CD4-positive, alpha-beta T cell (primary cell): ENCODE measurements at regions of chr14 and their contacts with region 1.

Region 1: GRCh38 chr14:39432179-39432618 is at the start of gene FBXO33:
- DNase-seq: peak; percentile 94 to 98 (median 96)
- ATAC-seq: peak; percentile 81
- H3K4me3 ChIP-seq: peak within 1 kb of the TSS; percentile 88
- H3K4me3 Mint-ChIP-seq: peak within 1 kb of the TSS; percentile 100
- H3K27ac ChIP-seq: peak within 1 kb of the TSS; percentile 99 to 100
- H3K27ac Mint-ChIP-seq: peak within 1 kb of the TSS; percentile 100
- H3K4me1 ChIP-seq: peaks cover 31% of the 10 kb centered on the region
- H3K4me1 Mint-ChIP-seq: peaks cover 50% of the 10 kb centered on the region
- H3K27me3 ChIP-seq: no peaks in the 10 kb centered on the region
- H3K27me3 Mint-ChIP-seq: no peaks in the 10 kb centered on the region
- CTCF ChIP-seq: no peak
- total RNA-seq, gene FBXO33: 94.6 to 97.4 TPM

Region 2: DNA sequence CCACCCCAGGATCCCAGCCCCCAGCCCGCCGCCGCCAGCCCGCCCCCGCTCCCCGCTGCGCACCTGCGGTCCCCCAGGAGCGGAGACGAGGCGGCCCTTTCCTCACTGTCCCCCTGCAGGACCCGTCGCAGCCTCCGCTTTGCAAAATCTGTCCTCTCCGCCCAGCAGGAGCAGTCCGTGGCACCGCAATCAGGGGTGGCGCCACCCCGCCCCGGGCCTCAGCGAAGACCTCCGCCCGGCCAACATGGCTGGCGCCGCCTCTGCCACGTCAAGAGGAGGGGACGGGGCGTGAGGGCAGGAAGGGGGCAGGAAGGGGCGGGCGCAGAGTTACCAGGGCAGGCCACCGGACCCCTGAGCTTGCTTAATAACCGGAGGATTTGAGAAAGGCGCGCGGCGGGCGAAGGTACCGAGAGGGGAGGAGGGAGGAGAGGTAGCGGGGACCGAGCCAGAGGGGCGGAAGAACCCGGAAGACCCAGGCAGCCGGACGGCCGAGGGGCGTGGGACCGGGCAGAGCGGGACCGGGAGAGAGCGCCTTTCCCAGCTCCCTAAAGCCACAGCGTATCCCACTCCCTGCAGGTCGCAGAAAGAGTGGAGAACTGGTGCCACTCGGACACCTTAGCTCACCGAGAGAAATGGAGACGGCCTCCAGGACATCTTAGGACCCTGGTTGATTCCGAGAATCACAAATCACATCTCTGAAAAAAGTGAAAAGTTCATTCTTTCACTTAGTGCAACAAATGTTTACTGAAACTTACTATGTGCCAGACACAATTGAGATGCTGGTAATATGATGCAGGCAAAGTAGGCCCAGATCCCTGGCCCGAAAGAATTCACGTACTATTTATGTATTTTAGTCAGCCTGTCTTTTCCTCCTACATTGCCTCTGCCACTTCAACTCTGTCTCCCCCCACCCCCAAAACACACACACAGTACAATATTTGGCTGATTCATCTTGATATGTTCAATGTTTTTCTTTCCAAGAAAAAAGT is 328.9 kb before region 1 on chr14 and contains the start of gene SEC23A:
- CTCF ChIA-PET with region 1: no interaction called
- POLR2A ChIA-PET with region 1: interaction called, 51 read pairs
- intact Hi-C with region 1: loop called in 1 of 2 experiments (anchors 2 kb)
- DNase-seq: peak; percentile 62 to 91 (median 78)
- ATAC-seq: peak; percentile 95
- H3K4me3 ChIP-seq: peak within 1 kb of the TSS; percentile 100
- H3K4me3 Mint-ChIP-seq: peak within 1 kb of the TSS; percentile 98
- H3K27ac ChIP-seq: peak within 1 kb of the TSS; percentile 83 to 96
- H3K27ac Mint-ChIP-seq: peak within 1 kb of the TSS; percentile 98
- H3K4me1 ChIP-seq: peaks cover 34% of the 10 kb centered on the region
- H3K4me1 Mint-ChIP-seq: peaks cover 56% of the 10 kb centered on the region
- H3K27me3 ChIP-seq: no peaks in the 10 kb centered on the region
- H3K27me3 Mint-ChIP-seq: no peaks in the 10 kb centered on the region
- CTCF ChIP-seq: no peak
- total RNA-seq, gene SEC23A: 68.4 to 82.1 TPM

Region 3: GRCh38 chr14:39169541-39169900 is 262.7 kb before region 1 on chr14:
- CTCF ChIA-PET with region 1: no interaction called
- POLR2A ChIA-PET with region 1: interaction called, 66 read pairs
- intact Hi-C with region 1: loop called in 1 of 2 experiments (anchors 2 kb)
- DNase-seq: peak in 1 of 14 experiments; percentile 11
- ATAC-seq: no peak
- H3K4me3 ChIP-seq: peak overlapping the region; percentile 97
- H3K4me3 Mint-ChIP-seq: peak overlapping the region; percentile 91
- H3K27ac ChIP-seq: peak overlapping the region; percentile 95 to 96
- H3K27ac Mint-ChIP-seq: peak overlapping the region; percentile 100
- H3K4me1 ChIP-seq: peaks cover 33% of the 10 kb centered on the region
- H3K4me1 Mint-ChIP-seq: peaks cover 66% of the 10 kb centered on the region
- H3K27me3 ChIP-seq: no peaks in the 10 kb centered on the region
- H3K27me3 Mint-ChIP-seq: no peaks in the 10 kb centered on the region
- CTCF ChIP-seq: no peak

Region 4: DNA sequence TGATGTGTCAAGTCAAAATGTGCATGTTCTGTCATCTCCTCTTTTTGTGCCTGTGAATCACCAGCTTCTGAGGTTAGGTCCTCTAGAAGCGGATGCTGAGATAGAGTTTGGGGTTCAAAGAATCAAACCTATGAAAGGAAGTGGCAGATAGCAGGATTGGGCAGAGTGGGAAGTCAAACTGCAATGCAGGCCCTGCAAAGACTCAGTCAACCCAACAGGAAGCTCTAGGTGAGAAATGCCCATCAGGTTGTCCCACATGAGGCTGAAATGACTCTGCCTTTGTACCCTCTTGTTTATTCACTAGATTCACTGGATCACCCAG is 203.0 kb before region 1 on chr14:
- CTCF ChIA-PET with region 1: no interaction called
- POLR2A ChIA-PET with region 1: interaction called, 13 read pairs
- intact Hi-C with region 1: no loop called
- DNase-seq: peak in 12 of 14 experiments; percentile 7 to 90 (median 34)
- ATAC-seq: peak; percentile 91
- H3K4me3 ChIP-seq: no peak overlapping the region
- H3K4me3 Mint-ChIP-seq: no peak overlapping the region
- H3K27ac ChIP-seq: peak overlapping the region; percentile 44 to 78
- H3K27ac Mint-ChIP-seq: peak overlapping the region; percentile 57
- H3K4me1 ChIP-seq: peaks cover 24% of the 10 kb centered on the region
- H3K4me1 Mint-ChIP-seq: peaks cover 35% of the 10 kb centered on the region
- H3K27me3 ChIP-seq: no peaks in the 10 kb centered on the region
- H3K27me3 Mint-ChIP-seq: no peaks in the 10 kb centered on the region
- CTCF ChIP-seq: no peak

Region 5: DNA sequence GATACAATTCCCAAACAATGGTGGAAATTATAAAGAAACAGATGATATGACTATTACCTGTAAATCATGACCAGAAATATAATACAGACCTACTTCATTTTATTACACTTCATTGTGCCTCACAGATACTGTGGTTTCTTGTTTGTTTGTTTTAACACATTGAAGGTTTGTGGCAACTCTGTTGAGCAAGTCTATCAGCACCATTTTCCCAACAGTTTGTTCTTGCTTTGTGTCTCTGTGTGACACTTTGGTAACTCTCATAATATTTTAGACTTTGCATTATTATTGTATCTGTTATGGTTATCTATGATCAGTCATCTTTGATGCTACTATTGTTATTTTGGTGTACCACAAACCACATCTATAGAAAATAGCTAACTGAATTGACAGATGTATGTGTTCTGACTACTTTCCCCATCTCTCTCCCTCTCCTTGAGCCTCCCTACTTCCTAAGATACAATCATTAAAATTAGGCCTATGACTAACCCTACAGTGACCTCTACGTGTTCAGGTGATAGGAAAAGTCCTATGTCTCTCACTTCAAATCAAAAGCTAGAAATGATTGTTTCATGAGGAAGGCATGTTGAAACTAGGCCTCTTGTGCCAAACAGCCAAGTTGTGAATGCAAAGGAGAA is 49.1 kb before region 1 on chr14:
- CTCF ChIA-PET with region 1: no interaction called
- POLR2A ChIA-PET with region 1: interaction called, 14 read pairs
- intact Hi-C with region 1: no loop called
- DNase-seq: peak in 3 of 14 experiments; percentile 27 to 43 (median 40)
- ATAC-seq: peak; percentile 54
- H3K4me3 ChIP-seq: no peak overlapping the region
- H3K4me3 Mint-ChIP-seq: peak overlapping the region; percentile 46
- H3K27ac ChIP-seq: no peak overlapping the region
- H3K27ac Mint-ChIP-seq: peak overlapping the region; percentile 59
- H3K4me1 ChIP-seq: no peaks in the 10 kb centered on the region
- H3K4me1 Mint-ChIP-seq: peaks cover 43% of the 10 kb centered on the region
- H3K27me3 ChIP-seq: no peaks in the 10 kb centered on the region
- H3K27me3 Mint-ChIP-seq: no peaks in the 10 kb centered on the region
- CTCF ChIP-seq: no peak

Region 6: DNA sequence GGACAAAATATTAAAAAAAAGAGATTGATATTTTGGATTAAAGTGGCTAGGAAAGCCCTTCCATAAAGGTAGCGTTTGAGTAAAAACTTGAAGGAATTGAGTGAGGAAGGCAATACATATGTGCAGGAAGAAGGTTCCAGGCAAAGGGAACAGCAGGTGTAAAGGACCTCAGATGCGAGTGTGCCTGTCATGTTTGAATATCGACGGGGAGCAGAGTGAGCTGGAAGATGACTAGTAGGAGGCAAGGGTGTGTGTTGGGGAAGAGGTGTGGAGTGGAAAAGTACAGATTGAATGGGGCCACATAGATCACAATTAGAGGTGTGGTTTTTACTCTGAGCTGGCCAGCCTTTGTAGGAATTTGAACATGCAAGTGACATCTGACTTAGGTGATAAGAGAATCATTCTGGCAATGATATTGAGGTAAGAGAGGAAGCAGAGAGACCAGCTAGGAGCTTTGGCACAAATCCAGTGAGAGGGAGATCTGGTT is 15.0 kb after region 1 on chr14:
- CTCF ChIA-PET with region 1: no interaction called
- POLR2A ChIA-PET with region 1: interaction called, 10 read pairs
- intact Hi-C with region 1: no loop called
- DNase-seq: no peak
- ATAC-seq: no peak
- H3K4me3 ChIP-seq: no peak overlapping the region
- H3K4me3 Mint-ChIP-seq: no peak overlapping the region
- H3K27ac ChIP-seq: no peak overlapping the region
- H3K27ac Mint-ChIP-seq: no peak overlapping the region
- H3K4me1 ChIP-seq: no peaks in the 10 kb centered on the region
- H3K4me1 Mint-ChIP-seq: no peaks in the 10 kb centered on the region
- H3K27me3 ChIP-seq: no peaks in the 10 kb centered on the region
- H3K27me3 Mint-ChIP-seq: no peaks in the 10 kb centered on the region
- CTCF ChIP-seq: no peak

Region 7: DNA sequence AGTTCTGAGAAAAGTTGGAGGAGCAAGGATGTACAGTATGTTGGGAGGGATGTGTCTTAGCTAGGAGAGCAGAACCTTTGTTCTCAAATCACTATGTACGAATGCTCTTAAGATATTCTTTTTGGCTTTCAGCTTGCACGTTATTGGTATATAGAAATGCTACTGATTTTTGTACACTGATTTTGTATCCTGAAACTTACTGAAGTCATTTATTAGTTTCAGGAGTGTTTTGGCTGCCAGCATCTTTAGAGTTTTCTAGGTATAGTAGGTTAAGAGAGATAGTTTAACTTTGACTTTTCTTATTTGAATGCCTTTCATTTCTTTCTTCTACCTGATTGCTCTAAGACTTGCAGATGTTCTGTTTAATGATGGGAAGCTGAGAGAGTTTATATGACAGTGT is 442.8 kb after region 1 on chr14:
- CTCF ChIA-PET with region 1: no interaction called
- POLR2A ChIA-PET with region 1: no interaction called
- intact Hi-C with region 1: no loop called
- DNase-seq: no peak
- ATAC-seq: no peak
- H3K4me3 ChIP-seq: no peak overlapping the region
- H3K4me3 Mint-ChIP-seq: no peak overlapping the region
- H3K27ac ChIP-seq: no peak overlapping the region
- H3K27ac Mint-ChIP-seq: no peak overlapping the region
- H3K4me1 ChIP-seq: no peaks in the 10 kb centered on the region
- H3K4me1 Mint-ChIP-seq: no peaks in the 10 kb centered on the region
- H3K27me3 ChIP-seq: no peaks in the 10 kb centered on the region
- H3K27me3 Mint-ChIP-seq: no peaks in the 10 kb centered on the region
- CTCF ChIP-seq: no peak